ENCODE measurements at regions of chr20 and their contacts with region 1.

Region 1: DNA sequence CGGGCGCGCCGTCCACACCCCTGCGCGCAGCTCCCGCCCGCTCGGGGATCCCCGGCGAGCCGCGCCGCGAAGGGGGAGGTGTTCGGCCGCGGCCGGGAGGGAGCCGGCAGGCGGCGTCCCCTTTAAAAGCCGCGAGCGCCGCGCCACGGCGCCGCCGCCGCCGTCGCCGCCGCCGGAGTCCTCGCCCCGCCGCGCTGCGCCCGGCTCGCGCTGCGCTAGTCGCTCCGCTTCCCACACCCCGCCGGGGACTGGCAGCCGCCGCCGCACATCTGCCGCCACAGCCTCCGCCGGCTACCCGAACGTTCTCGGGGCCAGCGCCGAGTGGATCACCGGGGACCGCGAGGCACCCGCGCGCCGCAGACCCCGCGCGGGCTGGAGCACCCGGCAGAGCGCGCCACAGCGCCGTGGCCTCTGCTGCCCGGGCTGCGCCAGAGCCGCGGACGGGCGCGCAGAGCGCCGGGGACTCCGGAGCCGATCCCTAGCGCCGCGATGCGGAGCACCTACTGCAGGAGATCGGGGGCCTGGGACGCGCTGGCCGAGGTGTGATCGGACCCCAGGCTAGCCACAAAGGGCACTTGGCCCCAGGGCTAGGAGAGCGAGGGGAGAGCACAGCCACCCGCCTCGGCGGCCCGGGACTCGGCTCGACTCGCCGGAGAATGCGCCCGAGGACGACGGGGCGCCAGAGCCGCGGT is at the start of gene BMP2:
- DNase-seq: no peak
- ATAC-seq: peak; percentile 58
- H3K4me3 ChIP-seq: 0 out of 2 replicates have a peak within 1 kb of the TSS, but pooled peaks have one; percentile 27
- H3K27ac ChIP-seq: no peak within 1 kb of the TSS
- H3K4me1 ChIP-seq: no peaks in the 10 kb centered on the region
- H3K27me3 ChIP-seq: peaks cover 0 to 10% of the 10 kb centered on the region in 2 experiments; a peak in 2 of 4 replicates
- CTCF ChIP-seq: no peak; a peak in 1 of 6 replicates
- EP300 ChIP-seq: no peak
- POLR2A ChIP-seq: no peak
- RAD21 ChIP-seq: no peak
- polyA plus RNA-seq, gene BMP2: 0.57 to 0.74 TPM

Region 2: GRCh38 chr20:6623989-6624388 is 143.7 kb before region 1 on chr20:
- CTCF ChIA-PET with region 1: interaction called, 18 read pairs
- POLR2A ChIA-PET with region 1: no interaction called
- RAD21 ChIA-PET with region 1: interaction called, 9 read pairs
- SMC1A ChIA-PET with region 1: interaction called, 11 read pairs
- in situ Hi-C with region 1: no loop called
- intact Hi-C with region 1: no loop called
- DNase-seq: peak; percentile 66
- ATAC-seq: peak; percentile 96
- H3K4me3 ChIP-seq: no peak overlapping the region
- H3K27ac ChIP-seq: no peak overlapping the region
- H3K4me1 ChIP-seq: no peaks in the 10 kb centered on the region
- H3K27me3 ChIP-seq: no peaks in the 10 kb centered on the region
- CTCF ChIP-seq: no peak
- EP300 ChIP-seq: peak in 1 of 2 experiments; percentile 90; a peak in 3 of 4 replicates
- POLR2A ChIP-seq: no peak
- RAD21 ChIP-seq: no peak

Region 3: GRCh38 chr20:6746901-6747609 is 20.6 kb before region 1 on chr20:
- CTCF ChIA-PET with region 1: interaction called, 11 read pairs
- POLR2A ChIA-PET with region 1: interaction called, 3 read pairs
- RAD21 ChIA-PET with region 1: no interaction called
- SMC1A ChIA-PET with region 1: interaction called, 7 read pairs
- in situ Hi-C with region 1: no loop called
- intact Hi-C with region 1: no loop called
- DNase-seq: peak; percentile 45
- ATAC-seq: peak; percentile 86
- H3K4me3 ChIP-seq: no peak overlapping the region
- H3K27ac ChIP-seq: no peak overlapping the region
- H3K4me1 ChIP-seq: no peaks in the 10 kb centered on the region
- H3K27me3 ChIP-seq: no peaks in the 10 kb centered on the region
- CTCF ChIP-seq: no peak
- EP300 ChIP-seq: no peak
- POLR2A ChIP-seq: no peak
- RAD21 ChIP-seq: no peak

Region 4: DNA sequence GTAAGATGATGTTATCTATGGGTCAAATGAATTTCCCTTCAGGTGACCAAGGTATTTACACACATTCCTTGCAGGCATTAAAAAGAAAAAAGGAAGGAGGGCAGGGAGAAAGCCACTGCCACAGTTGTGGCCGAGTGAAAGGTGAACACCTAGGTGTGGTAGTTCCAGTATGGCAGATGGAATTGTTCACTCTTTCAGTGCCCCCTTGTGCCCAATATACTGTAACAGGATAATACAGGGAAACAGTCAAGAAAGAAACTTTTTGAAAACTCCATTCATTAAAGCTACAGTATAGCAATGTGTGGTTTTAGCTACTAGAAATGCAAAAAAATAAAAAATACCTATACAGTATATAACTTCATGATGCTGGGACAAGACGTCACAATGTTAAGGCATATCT is 51.9 kb after region 1 on chr20:
- CTCF ChIA-PET with region 1: interaction called, 13 read pairs
- POLR2A ChIA-PET with region 1: no interaction called
- RAD21 ChIA-PET with region 1: interaction called, 4 read pairs
- SMC1A ChIA-PET with region 1: interaction called, 16 read pairs
- in situ Hi-C with region 1: no loop called
- intact Hi-C with region 1: no loop called
- DNase-seq: no peak
- ATAC-seq: peak; percentile 84
- H3K4me3 ChIP-seq: no peak overlapping the region
- H3K27ac ChIP-seq: no peak overlapping the region
- H3K4me1 ChIP-seq: no peaks in the 10 kb centered on the region
- H3K27me3 ChIP-seq: no peaks in the 10 kb centered on the region
- CTCF ChIP-seq: no peak; a peak in 1 of 6 replicates
- EP300 ChIP-seq: no peak
- POLR2A ChIP-seq: no peak
- RAD21 ChIP-seq: no peak

Region 5: DNA sequence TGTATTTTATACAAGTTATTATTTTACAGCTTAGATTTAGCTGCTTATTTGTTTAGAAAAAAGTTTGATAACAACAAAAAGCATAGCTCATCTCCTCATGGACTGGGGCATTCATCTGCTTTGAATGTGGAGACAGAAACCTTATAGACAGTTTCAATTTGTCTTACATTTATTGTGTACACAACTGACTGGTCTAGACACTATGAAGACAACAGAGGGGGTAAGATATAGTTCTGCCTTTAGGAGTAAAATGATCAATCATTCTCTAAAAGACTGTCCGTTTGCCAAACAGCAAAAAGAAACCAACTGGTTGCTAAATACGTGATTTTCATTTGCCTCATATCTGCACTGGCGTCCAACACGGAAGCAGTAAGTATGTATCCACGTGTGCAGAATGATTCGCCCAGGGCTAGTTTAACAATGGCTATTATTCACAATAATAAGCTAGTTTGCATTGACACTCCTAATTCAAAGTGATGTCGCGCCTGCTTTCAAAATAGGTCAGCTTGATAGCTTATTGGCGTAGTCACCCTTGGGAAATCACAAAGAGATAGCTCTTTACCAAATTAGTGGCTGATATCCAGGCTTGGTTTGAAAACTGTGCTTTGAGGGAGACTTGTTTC is 153.4 kb after region 1 on chr20:
- CTCF ChIA-PET with region 1: interaction called, 5 read pairs
- POLR2A ChIA-PET with region 1: no interaction called
- RAD21 ChIA-PET with region 1: interaction called, 5 read pairs
- SMC1A ChIA-PET with region 1: interaction called, 13 read pairs
- in situ Hi-C with region 1: no loop called
- intact Hi-C with region 1: no loop called
- DNase-seq: no peak
- ATAC-seq: peak; percentile 66
- H3K4me3 ChIP-seq: no peak overlapping the region
- H3K27ac ChIP-seq: no peak overlapping the region
- H3K4me1 ChIP-seq: no peaks in the 10 kb centered on the region
- H3K27me3 ChIP-seq: no peaks in the 10 kb centered on the region
- CTCF ChIP-seq: no peak
- EP300 ChIP-seq: peak in 1 of 2 experiments; percentile 46; a peak in 1 of 4 replicates
- POLR2A ChIP-seq: no peak
- RAD21 ChIP-seq: no peak

Region 6: DNA sequence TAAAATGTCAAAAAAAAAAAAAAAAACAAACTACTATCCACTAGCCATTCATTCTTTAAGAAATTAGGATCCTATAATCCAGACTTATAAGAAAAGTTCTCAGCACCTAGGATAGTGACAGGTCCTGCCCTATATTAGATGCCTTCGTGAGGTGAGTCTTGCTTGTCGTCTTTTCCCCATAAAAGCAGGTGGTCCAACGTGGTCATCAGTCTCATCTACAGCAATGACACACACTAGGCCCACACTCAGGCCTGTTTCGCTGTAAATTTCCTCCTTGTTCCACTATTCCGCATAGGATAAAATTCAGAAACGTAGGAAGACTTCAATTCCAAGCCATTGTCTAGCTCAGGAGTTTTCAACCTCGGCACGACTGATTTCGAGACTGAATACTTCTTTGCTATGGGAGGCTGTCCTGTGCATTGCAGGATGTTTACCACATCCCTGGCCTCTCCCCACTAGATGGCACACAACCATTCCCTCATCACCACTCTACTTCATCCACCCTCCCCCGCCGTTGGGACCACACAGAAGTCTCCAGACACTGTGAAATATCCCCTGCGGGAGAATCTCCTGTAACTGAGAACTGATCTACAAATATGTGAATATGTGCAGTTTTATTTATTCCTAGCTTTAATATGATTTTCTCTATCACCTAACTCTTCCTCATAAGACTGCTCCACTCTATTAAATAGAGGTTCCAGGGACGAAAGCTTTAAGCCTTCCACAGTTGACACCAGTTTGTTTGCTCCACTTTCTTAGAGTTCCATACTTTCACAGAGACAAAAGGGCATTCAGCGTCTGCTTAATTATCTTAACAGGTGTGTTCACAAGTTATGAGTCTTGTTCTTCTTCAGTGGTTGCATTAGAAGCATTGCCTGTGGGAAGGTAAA is 346.1 kb after region 1 on chr20:
- CTCF ChIA-PET with region 1: interaction called, 14 read pairs
- POLR2A ChIA-PET with region 1: no interaction called
- RAD21 ChIA-PET with region 1: no interaction called
- SMC1A ChIA-PET with region 1: interaction called, 12 read pairs
- in situ Hi-C with region 1: no loop called
- intact Hi-C with region 1: no loop called
- DNase-seq: no peak
- ATAC-seq: peak; percentile 98
- H3K4me3 ChIP-seq: no peak overlapping the region
- H3K27ac ChIP-seq: no peak overlapping the region
- H3K4me1 ChIP-seq: no peaks in the 10 kb centered on the region
- H3K27me3 ChIP-seq: no peaks in the 10 kb centered on the region
- CTCF ChIP-seq: peak; percentile 12 to 54 (median 39); a peak in 4 of 6 replicates
- EP300 ChIP-seq: no peak
- POLR2A ChIP-seq: no peak
- RAD21 ChIP-seq: peak; percentile 28; the same call in 1 of the 2 replicates

Region 7: GRCh38 chr20:7859356-7859802 is 1091.7 kb after region 1 on chr20:
- CTCF ChIA-PET with region 1: interaction called, 5 read pairs
- POLR2A ChIA-PET with region 1: no interaction called
- RAD21 ChIA-PET with region 1: no interaction called
- SMC1A ChIA-PET with region 1: interaction called, 6 read pairs
- in situ Hi-C with region 1: loop called (anchors 25 kb)
- intact Hi-C with region 1: loop called (anchors 5 kb)
- DNase-seq: peak; percentile 8
- ATAC-seq: peak; percentile 68
- H3K4me3 ChIP-seq: no peak overlapping the region
- H3K27ac ChIP-seq: no peak overlapping the region
- H3K4me1 ChIP-seq: no peaks in the 10 kb centered on the region
- H3K27me3 ChIP-seq: no peaks in the 10 kb centered on the region
- CTCF ChIP-seq: peak; percentile 50 to 66 (median 51); a peak in 5 of 6 replicates
- EP300 ChIP-seq: no peak
- POLR2A ChIP-seq: no peak
- RAD21 ChIP-seq: peak; percentile 93